ENCODE measurements at regions of chr1 and their contacts with region 1.

Region 1: DNA sequence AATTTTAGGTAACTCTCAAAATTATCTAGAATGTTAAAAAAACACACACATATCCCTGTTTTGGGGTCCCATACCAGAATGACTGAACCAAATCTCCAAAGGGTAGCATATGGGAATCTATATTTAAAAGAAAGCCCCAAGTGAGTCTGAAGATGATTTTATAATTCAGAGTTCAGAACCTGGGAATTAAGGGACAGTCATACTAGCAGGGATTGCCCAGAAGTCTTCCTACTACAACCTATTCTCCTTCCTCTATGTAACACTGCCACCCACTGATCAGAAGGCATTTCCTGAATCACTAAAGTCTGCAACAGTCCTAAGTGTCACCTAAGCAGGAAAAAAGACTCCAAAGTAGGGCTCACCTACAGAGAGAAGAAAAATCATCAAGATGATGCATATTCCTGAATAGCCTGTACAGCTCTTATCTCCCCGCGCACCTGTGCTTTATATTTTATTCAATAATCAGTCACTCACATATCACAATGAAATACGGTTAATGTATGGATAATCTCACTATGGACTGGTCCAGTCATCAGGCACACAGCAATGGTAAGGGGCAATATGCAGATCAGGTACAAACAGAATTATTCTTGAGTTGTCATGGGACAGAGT is 4.9 kb downstream of the RGS1 start:
- DNase-seq: no peak
- ATAC-seq: no peak
- H3K4me3 Mint-ChIP-seq: peak overlapping the region; percentile 74
- H3K27ac Mint-ChIP-seq: no peak overlapping the region
- H3K4me1 Mint-ChIP-seq: peaks cover 45% of the 10 kb centered on the region
- H3K27me3 Mint-ChIP-seq: peaks cover 2% of the 10 kb centered on the region
- CTCF ChIP-seq: no peak

Region 2: DNA sequence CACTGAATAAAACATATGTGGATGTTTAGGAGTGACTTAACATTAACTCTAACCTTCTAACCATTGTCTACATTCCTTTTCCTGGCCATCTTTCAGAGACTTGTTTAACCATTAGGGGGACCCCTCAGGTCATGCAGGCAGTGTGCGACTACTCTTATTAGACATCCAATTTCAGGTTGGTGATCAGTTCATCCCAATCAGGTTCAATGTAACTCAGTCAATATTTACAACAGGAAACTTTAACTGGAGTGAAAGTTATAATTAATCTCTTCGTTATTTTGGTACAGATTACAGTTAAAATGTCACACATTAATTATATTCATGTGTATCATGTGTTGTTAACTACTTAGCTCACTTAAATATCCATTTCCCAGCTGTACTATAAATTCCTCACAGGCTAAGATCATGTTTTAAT is 73.7 kb before region 1 on chr1:
- CTCF ChIA-PET with region 1: interaction called, 22 read pairs
- POLR2A ChIA-PET with region 1: no interaction called
- intact Hi-C with region 1: loop called (anchors 1 kb)
- DNase-seq: no peak
- ATAC-seq: peak; percentile 79
- H3K4me3 Mint-ChIP-seq: no peak overlapping the region
- H3K27ac Mint-ChIP-seq: no peak overlapping the region
- H3K4me1 Mint-ChIP-seq: peaks cover 5% of the 10 kb centered on the region
- H3K27me3 Mint-ChIP-seq: peaks cover 8% of the 10 kb centered on the region
- CTCF ChIP-seq: no peak

Region 3: DNA sequence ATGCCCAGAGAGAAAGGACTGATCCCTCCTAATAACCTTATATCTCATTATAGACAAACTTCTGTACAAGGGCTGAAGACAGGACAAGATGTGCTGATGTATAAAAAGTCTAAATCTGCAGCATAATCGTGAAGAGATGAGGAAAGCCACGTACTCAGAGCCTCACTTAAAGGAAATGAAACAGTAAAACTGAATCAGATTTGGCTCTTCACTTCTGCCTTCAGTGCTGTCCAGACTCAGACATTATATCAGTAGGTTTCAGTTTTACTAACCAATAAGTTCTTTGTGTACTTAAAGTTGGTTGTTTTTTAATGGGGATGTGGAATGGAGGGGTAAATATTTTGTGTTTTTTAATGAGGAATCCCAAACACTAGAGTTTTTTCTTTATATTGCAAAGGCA is 50.2 kb before region 1 on chr1:
- CTCF ChIA-PET with region 1: no interaction called
- POLR2A ChIA-PET with region 1: no interaction called
- intact Hi-C with region 1: loop called (anchors 1 kb)
- DNase-seq: no peak
- ATAC-seq: peak; percentile 98
- H3K4me3 Mint-ChIP-seq: peak overlapping the region; percentile 60
- H3K27ac Mint-ChIP-seq: peak overlapping the region; percentile 65
- H3K4me1 Mint-ChIP-seq: peaks cover 23% of the 10 kb centered on the region
- H3K27me3 Mint-ChIP-seq: no peaks in the 10 kb centered on the region
- CTCF ChIP-seq: no peak

Region 4: DNA sequence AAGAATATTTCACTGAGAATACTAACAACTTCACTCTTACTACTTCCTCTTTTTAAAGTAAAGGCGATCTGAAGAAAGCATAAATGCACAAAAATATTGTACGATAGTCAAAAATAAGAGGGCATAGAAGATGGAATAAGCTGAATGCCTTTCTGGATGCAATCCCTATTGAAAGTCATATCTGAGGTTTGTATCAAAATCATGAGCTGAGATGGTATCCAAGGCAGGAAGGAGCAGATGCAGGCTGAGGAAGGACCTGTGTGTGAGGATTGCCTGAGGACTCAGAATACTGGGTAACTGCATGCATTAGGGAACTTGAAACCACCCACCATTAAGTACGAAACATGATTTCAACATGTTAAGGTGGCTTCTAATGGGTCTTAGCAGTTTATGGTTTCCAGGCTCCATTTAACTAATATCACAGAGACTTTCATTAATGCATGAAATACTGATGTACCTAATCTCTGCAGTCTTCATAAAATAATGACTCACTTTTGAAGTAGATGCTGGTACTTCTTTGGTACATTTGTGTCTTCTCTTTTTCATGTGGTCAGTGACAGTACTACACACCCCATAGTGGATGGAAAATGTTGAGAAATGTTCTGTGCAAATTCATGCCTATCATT is 34.4 kb before region 1 on chr1:
- CTCF ChIA-PET with region 1: interaction called, 16 read pairs
- POLR2A ChIA-PET with region 1: interaction called, 38 read pairs
- intact Hi-C with region 1: loop called (anchors 1 kb)
- DNase-seq: no peak
- ATAC-seq: peak; percentile 66
- H3K4me3 Mint-ChIP-seq: peak overlapping the region; percentile 65
- H3K27ac Mint-ChIP-seq: peak overlapping the region; percentile 84
- H3K4me1 Mint-ChIP-seq: peaks cover 60% of the 10 kb centered on the region
- H3K27me3 Mint-ChIP-seq: no peaks in the 10 kb centered on the region
- CTCF ChIP-seq: no peak

Region 5: DNA sequence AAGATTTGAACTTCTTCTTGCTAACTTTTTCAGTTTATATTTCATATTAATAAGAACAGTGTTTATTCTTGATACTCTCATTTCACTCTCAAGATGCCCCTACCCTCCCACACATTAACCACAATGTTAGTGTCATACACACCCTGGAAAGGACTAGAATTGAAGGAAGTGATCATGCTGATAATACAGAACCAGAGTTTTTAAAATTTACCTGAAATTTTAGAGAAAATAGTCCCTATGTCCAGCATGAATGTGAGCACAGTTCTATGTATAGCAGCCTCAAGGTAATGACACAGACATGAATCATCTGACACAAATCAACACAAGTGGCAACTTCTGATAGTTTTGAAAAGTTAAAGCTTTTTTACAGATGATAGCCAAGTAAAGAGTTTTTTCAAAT is 21.1 kb after region 1 on chr1:
- CTCF ChIA-PET with region 1: interaction called, 3 read pairs
- POLR2A ChIA-PET with region 1: no interaction called
- intact Hi-C with region 1: loop called (anchors 1 kb)
- DNase-seq: no peak
- ATAC-seq: no peak
- H3K4me3 Mint-ChIP-seq: no peak overlapping the region
- H3K27ac Mint-ChIP-seq: no peak overlapping the region
- H3K4me1 Mint-ChIP-seq: peaks cover 40% of the 10 kb centered on the region
- H3K27me3 Mint-ChIP-seq: no peaks in the 10 kb centered on the region
- CTCF ChIP-seq: no peak

Region 6: GRCh38 chr1:192892934-192893333 is 312.5 kb after region 1 on chr1:
- CTCF ChIA-PET with region 1: no interaction called
- POLR2A ChIA-PET with region 1: no interaction called
- intact Hi-C with region 1: no loop called
- DNase-seq: no peak
- ATAC-seq: no peak
- H3K4me3 Mint-ChIP-seq: no peak overlapping the region
- H3K27ac Mint-ChIP-seq: no peak overlapping the region
- H3K4me1 Mint-ChIP-seq: no peaks in the 10 kb centered on the region
- H3K27me3 Mint-ChIP-seq: no peaks in the 10 kb centered on the region
- CTCF ChIP-seq: no peak

Region 7: DNA sequence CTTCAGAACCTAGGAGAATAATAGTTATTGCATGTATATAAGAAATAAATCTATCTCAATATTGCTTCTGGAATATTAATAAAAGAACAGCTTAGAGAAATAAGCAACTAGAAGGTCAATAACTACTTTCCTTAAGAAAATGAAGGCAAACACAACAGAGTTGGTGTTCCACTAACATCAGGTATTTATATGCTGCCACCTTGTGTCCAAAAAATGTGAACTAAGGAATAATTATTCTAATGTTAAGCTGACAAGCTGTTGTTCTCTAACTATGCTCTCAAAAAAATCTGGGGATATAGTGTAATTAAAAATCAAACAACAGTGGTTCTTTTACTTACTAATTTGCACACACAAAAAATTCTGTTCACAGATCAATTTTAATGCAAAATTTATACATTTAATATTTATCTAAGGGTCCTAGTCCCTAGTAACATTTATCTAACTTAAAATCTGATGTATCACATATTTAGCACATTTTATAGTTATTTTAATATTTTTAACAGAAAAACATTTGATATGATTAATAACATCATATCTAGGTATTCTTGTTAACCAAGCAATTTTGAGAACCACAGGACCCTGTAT is 439.1 kb after region 1 on chr1:
- CTCF ChIA-PET with region 1: interaction called, 3 read pairs
- POLR2A ChIA-PET with region 1: no interaction called
- intact Hi-C with region 1: loop called (anchors 1 kb)
- DNase-seq: no peak
- ATAC-seq: no peak
- H3K4me3 Mint-ChIP-seq: no peak overlapping the region
- H3K27ac Mint-ChIP-seq: no peak overlapping the region
- H3K4me1 Mint-ChIP-seq: no peaks in the 10 kb centered on the region
- H3K27me3 Mint-ChIP-seq: no peaks in the 10 kb centered on the region
- CTCF ChIP-seq: no peak

Region 8: DNA sequence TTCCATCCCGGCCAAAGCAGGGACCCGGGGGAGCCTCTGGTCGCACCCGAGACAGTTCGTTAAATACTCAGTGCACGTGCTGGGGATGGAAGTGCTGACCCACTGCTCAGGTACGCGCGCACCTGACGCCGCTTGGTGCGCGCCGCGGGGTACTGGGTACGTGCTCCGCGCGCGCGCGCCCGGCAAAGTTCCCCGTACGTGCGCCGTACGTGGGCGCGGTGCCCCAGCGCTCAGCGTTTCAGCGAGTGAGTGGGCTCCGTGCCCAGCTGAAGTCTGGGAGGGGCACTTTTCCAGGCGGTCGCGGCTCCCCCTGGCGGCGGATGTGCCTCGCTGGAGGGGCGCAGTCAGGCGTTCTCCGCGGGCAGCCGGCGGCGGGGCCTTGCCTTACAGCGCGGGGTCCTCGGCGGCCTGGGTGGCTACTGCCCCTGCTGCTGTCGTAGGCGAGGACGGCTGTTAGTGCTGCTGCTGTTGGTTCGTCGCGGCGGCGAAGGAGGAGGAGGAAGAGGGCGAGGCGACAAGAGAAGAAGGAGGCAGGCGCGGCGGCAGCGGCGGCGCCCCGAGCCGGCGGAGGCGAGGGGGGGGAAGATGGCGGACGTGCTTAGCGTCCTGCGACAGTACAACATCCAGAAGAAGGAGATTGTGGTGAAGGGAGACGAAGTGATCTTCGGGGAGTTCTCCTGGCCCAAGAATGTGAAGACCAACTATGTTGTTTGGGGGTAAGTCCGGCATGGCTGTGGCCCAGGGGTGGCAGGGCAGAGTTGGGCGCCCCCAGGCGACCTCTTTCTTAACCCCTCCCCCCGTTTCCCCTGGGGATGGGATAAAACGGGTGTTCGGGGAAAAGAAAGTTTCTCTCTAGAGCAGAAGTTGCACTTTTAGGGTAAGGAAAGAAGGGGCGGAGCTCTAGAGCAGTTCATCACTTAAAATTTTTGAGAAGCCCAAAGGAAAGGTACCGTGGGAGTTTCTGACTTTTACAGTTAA is 541.4 kb after region 1 on chr1 and contains the start of gene CDC73:
- CTCF ChIA-PET with region 1: no interaction called
- POLR2A ChIA-PET with region 1: interaction called, 3 read pairs
- intact Hi-C with region 1: loop called (anchors 1 kb)
- DNase-seq: peak; percentile 99
- ATAC-seq: peak; percentile 90
- H3K4me3 Mint-ChIP-seq: peak within 1 kb of the TSS; percentile 93
- H3K27ac Mint-ChIP-seq: peak within 1 kb of the TSS; percentile 94
- H3K4me1 Mint-ChIP-seq: peaks cover 43% of the 10 kb centered on the region
- H3K27me3 Mint-ChIP-seq: no peaks in the 10 kb centered on the region
- CTCF ChIP-seq: peak; percentile 17
- total RNA-seq, gene CDC73: 55.9 and 59.1 TPM in 2 replicates